B cell (primary cell): ENCODE measurements at regions of chr4 and their contacts with region 1.

Region 1: DNA sequence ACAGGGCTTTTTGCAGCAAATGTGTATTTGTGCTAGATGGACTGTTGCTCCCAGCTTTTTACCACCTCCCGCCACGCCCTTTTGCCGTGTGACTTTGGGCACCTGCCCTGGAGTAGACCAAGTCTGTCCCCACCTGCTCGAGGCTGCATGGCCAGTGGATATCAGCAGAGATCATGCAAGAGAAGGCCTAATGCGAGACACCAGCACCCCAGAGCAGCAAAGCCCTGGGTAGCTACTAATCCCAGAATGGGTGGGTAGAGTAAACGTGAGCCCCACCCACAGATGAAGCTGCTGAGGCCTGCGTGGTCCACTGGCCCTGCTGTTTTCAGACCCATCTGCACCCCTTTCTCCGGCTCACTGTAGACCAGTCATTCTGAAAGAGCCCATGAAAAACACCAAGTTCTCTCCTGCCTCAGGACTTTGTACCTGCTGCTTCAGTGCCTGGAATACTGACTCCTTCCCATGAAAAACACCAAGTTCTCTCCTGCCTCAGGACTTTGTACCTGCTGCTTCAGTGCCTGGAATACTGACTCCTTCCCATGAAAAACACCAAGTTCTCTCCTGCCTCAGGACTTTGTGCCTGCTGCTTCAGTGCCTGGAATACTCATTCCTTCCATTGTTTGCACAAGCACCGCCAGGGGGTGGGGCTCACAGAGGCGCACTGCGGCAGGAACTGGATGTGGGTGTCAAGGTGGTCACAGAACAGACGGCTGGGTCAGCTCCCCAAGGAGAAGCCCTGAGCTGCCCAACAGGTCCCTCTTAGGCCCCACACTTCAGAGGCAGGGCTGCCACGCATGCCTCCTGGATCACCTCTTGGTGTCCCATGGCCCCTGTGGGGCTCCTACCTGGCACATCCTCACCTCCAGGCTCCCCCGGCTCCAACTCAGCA is 5.1 kb upstream of the TNIP2 start:
- DNase-seq: no peak
- ATAC-seq: no peak
- H3K4me3 ChIP-seq: no peak overlapping the region
- H3K4me3 Mint-ChIP-seq: no peak overlapping the region
- H3K27ac ChIP-seq: no peak overlapping the region
- H3K27ac Mint-ChIP-seq: no peak overlapping the region
- H3K4me1 ChIP-seq: peaks cover 8 to 28% of the 10 kb centered on the region in 2 donors
- H3K4me1 Mint-ChIP-seq: peaks cover 21% of the 10 kb centered on the region
- H3K27me3 ChIP-seq: no peaks in the 10 kb centered on the region
- H3K27me3 Mint-ChIP-seq: no peaks in the 10 kb centered on the region
- CTCF ChIP-seq: no peak

Region 2: DNA sequence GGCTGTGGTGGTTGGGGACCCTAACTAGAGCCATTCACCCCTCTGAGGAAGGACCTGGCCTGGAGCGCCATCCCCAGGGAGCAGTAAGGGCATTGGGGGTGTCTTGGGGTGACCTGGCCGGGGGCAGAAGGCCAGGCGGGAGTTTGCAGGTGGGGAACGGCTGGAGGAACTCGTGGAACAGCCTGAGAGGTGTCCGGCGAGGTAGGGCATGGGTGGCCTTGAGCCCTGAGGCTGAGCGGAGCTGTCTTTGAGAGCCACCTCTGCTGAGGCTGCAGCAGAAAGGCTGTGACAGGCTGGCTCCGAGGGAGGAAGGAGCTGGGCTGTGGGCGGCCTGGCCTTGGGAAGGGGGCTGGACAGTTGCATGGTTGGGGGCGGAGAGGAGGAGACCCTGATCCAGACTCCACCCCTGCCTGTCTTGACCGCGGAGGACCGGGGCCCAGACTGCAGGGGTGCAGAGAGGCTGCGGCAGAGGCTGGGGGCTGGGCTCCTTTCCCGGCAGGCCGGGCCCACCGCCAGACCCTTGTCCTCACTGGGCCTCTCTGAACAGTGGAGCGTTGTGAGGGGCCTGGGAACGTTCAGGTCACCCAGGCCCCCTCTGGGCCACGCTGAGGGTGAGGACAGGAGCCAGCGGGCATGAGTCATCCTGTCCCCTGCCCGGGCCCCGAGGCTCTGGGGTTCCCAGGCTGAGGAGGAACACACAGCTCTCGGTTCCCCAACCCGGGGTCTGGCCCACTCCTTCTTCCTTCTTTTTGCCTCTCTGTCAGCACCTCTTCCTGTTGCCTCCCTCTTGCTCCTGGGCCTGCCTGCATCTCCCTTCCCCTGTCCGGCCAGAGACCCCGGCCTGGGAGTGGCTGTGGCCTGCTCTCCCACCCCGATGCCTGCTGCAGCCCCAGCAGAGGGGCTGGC is 39.7 kb after region 1 on chr4:
- CTCF ChIA-PET with region 1: interaction called, 5 read pairs
- POLR2A ChIA-PET with region 1: no interaction called
- intact Hi-C with region 1: loop called (anchors 2 kb)
- DNase-seq: peak; percentile 74
- ATAC-seq: peak; percentile 70
- H3K4me3 ChIP-seq: peak overlapping the region; percentile 12 to 67 (median 59)
- H3K4me3 Mint-ChIP-seq: peak overlapping the region; percentile 78
- H3K27ac ChIP-seq: peak overlapping the region; percentile 76 to 83
- H3K27ac Mint-ChIP-seq: peak overlapping the region; percentile 86
- H3K4me1 ChIP-seq: peaks cover 81 to 95% of the 10 kb centered on the region in 2 donors
- H3K4me1 Mint-ChIP-seq: peaks cover 71% of the 10 kb centered on the region
- H3K27me3 ChIP-seq: no peaks in the 10 kb centered on the region
- H3K27me3 Mint-ChIP-seq: no peaks in the 10 kb centered on the region
- CTCF ChIP-seq: no peak

Region 3: DNA sequence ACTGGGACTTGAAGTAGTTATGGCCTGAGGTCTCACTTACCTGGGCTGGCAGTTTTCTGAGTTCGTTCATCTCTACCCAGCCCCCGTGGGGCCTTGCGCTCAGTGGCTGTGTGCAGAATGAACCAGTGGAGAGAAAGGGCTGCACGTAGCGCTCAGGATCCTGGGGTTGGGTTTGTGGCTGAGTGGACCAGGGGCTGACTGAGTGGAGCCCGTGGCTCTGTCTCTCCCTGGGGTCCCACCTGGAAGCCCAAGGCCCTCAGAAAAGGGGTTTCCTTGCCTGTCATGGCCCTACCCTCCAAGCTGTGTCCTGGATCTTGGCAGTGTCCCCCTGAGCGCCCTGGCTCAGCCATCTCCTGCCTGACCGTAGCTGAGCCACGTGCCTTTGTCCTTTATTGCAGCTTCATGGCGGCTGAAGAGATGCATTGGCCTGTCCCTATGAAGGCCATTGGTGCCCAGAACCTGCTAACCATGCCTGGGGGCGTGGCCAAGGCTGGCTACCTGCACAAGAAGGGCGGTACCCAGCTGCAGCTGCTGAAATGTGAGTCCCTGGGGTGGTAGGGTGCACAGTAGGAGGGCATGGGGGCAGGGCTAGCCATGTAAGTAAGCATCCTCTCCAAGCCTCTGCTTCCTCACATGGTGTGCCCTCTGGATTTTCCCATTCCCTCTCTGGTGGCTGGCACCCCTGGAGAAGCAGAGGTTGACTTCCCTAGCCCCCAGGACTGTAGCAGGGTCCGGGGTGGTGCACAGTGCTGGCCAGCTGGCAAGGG is 59.1 kb after region 1 on chr4:
- CTCF ChIA-PET with region 1: no interaction called
- POLR2A ChIA-PET with region 1: no interaction called
- intact Hi-C with region 1: no loop called
- DNase-seq: no peak
- ATAC-seq: no peak
- H3K4me3 ChIP-seq: no peak overlapping the region
- H3K4me3 Mint-ChIP-seq: no peak overlapping the region
- H3K27ac ChIP-seq: no peak overlapping the region
- H3K27ac Mint-ChIP-seq: no peak overlapping the region
- H3K4me1 ChIP-seq: peaks cover 33 to 44% of the 10 kb centered on the region in 2 donors
- H3K4me1 Mint-ChIP-seq: peaks cover 33% of the 10 kb centered on the region
- H3K27me3 ChIP-seq: no peaks in the 10 kb centered on the region
- H3K27me3 Mint-ChIP-seq: no peaks in the 10 kb centered on the region
- CTCF ChIP-seq: no peak

Region 4: GRCh38 chr4:2852481-2852921 is 91.2 kb after region 1 on chr4:
- CTCF ChIA-PET with region 1: interaction called, 8 read pairs
- POLR2A ChIA-PET with region 1: no interaction called
- intact Hi-C with region 1: loop called (anchors 2 kb)
- DNase-seq: peak; percentile 87
- ATAC-seq: peak; percentile 83
- H3K4me3 ChIP-seq: peak overlapping the region; percentile 8 to 48 (median 23)
- H3K4me3 Mint-ChIP-seq: peak overlapping the region; percentile 76
- H3K27ac ChIP-seq: peak overlapping the region; percentile 72 to 81
- H3K27ac Mint-ChIP-seq: peak overlapping the region; percentile 79
- H3K4me1 ChIP-seq: peaks cover 88% of the 10 kb centered on the region in 2 donors
- H3K4me1 Mint-ChIP-seq: peaks cover 76% of the 10 kb centered on the region
- H3K27me3 ChIP-seq: no peaks in the 10 kb centered on the region
- H3K27me3 Mint-ChIP-seq: no peaks in the 10 kb centered on the region
- CTCF ChIP-seq: no peak

Region 5: GRCh38 chr4:2871911-2872310 is 110.6 kb after region 1 on chr4:
- CTCF ChIA-PET with region 1: interaction called, 19 read pairs
- POLR2A ChIA-PET with region 1: no interaction called
- intact Hi-C with region 1: no loop called
- DNase-seq: peak; percentile 26
- ATAC-seq: no peak
- H3K4me3 ChIP-seq: no peak overlapping the region
- H3K4me3 Mint-ChIP-seq: peak overlapping the region; percentile 23
- H3K27ac ChIP-seq: peak overlapping the region in 1 of 2 donors; percentile 47
- H3K27ac Mint-ChIP-seq: peak overlapping the region; percentile 54
- H3K4me1 ChIP-seq: peaks cover 30 to 47% of the 10 kb centered on the region in 2 donors
- H3K4me1 Mint-ChIP-seq: peaks cover 73% of the 10 kb centered on the region
- H3K27me3 ChIP-seq: no peaks in the 10 kb centered on the region
- H3K27me3 Mint-ChIP-seq: no peaks in the 10 kb centered on the region
- CTCF ChIP-seq: no peak

Region 6: GRCh38 chr4:2954358-2955185 is 193.3 kb after region 1 on chr4:
- CTCF ChIA-PET with region 1: interaction called, 11 read pairs
- POLR2A ChIA-PET with region 1: no interaction called
- intact Hi-C with region 1: no loop called
- DNase-seq: peak; percentile 75
- ATAC-seq: peak; percentile 72
- H3K4me3 ChIP-seq: no peak overlapping the region
- H3K4me3 Mint-ChIP-seq: no peak overlapping the region
- H3K27ac ChIP-seq: peak overlapping the region; percentile 23 to 37
- H3K27ac Mint-ChIP-seq: peak overlapping the region; percentile 63
- H3K4me1 ChIP-seq: no peaks in the 10 kb centered on the region
- H3K4me1 Mint-ChIP-seq: peaks cover 12% of the 10 kb centered on the region
- H3K27me3 ChIP-seq: no peaks in the 10 kb centered on the region
- H3K27me3 Mint-ChIP-seq: no peaks in the 10 kb centered on the region
- CTCF ChIP-seq: peak; percentile 56